ENCODE measurements at regions of chr9 and their contacts with region 1.

Region 1: GRCh38 chr9:127785023-127785932 is 556 bp upstream of the CDK9 start:
- DNase-seq: peak; percentile 89 to 94 (median 92)
- H3K4me3 ChIP-seq: peak overlapping the region; percentile 59 to 94 (median 85)
- H3K27ac ChIP-seq: peak overlapping the region in 1 of 2 experiments; percentile 89
- H3K4me1 ChIP-seq: peaks cover 23 to 69% (median 62%) of the 10 kb centered on the region in 4 experiments
- H3K27me3 ChIP-seq: no peaks in the 10 kb centered on the region

Region 2: DNA sequence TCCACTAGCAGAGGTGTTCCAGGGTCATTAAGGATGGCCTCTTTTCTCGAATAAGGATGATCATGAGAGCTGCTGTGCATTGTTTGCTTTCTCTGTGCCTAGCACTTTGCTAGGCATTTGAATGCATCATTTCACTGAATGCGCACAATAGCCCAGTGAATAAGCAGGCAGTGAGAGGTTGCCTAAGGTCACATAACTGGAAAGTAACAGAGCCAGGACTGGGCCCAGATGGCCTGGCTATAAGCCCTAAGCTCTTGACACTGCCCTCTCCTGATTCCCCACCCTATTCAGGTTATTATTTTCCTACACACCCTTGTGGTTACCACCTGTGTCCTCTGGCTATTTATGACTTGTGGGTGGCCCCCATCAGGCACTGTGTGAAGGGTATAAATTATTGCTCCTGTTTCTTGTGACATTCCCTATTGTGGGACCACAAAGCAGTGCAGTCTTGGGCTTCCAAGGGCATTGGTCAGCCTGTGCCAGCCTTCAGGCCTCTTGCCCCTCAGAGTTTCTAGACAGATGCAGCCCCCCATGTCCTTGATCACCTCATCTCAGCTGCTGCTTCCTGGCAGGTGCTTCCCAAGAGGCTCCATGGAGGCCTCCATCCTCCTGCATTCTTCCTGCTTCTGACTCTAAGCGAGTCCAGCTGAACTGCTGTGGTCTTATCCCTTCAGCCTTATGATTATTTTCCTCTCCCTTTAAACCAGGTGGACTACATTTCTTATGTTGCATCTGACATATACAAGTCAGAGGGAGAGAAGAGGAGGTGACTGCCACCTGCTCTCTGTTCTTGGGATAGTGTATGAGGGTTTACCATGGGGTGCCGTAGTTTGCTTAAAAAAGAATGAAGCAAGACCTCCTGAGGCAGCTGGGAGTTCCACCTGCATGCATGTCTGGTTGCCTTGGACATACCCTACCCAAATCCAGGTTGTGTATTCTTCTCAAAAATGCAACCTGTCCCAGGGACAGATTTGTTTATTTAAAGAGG is 710.4 kb before region 1 on chr9:
- CTCF ChIA-PET with region 1: no interaction called
- POLR2A ChIA-PET with region 1: no interaction called
- DNase-seq: no peak
- H3K4me3 ChIP-seq: no peak overlapping the region
- H3K27ac ChIP-seq: no peak overlapping the region
- H3K4me1 ChIP-seq: no peaks in the 10 kb centered on the region
- H3K27me3 ChIP-seq: peaks cover 0 to 2% (median 0%) of the 10 kb centered on the region in 5 experiments

Region 3: GRCh38 chr9:127651697-127652610 is 133.3 kb before region 1 on chr9:
- CTCF ChIA-PET with region 1: no interaction called
- POLR2A ChIA-PET with region 1: no interaction called
- DNase-seq: peak; percentile 31 to 72 (median 47)
- H3K4me3 ChIP-seq: peak overlapping the region in 1 of 7 experiments; percentile 4
- H3K27ac ChIP-seq: peak overlapping the region in 1 of 2 experiments; percentile 57
- H3K4me1 ChIP-seq: peaks cover 10 to 19% (median 16%) of the 10 kb centered on the region in 4 experiments
- H3K27me3 ChIP-seq: no peaks in the 10 kb centered on the region

Region 4: DNA sequence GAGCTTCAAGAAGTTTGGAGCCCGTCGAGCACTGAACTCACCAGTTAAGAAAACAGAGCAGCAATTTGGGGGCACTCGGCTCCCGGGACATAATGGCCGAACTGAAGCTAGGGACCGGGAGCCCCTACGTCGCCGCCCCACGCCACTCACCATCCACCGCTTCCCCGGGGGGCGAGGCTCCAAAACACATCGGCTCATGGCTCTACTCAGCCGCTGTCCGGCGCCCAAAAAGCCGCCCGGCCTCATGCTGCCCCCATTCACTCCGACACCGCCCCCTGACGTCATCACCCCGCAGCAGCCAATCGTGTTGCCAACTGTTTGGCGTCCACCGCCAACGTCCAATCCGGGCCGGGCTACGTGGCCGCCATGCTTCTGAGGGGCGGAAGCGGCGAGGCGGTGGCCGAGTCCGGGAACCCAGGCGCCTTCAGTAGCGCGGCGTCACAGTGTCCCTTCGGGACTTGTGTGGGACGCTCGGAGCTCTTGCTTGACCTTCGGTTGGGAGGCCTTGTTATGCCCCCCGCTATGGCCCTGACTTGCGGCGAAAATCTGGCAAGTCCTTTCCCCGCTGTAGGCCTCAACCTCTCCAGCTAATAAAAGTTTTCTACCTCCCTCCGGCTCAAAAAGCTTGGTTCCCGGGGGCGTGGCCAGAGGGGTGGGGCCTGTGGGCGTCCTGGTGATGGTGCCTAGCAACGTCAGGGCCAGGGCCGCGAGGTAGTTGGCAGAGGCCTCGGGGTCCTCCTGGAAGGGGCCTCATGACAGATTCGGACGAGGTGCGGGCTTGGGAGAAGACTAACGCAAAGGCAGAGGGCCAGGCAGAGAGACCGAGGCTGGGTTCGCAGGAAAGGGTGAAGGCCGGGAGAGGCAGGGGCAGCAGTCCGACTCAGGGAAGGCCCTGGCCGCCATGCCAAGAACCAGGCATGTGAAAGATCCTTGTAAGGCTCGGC is 69.6 kb before region 1 on chr9 and contains the starts of genes PTRH1 and TTC16:
- CTCF ChIA-PET with region 1: no interaction called
- POLR2A ChIA-PET with region 1: no interaction called
- DNase-seq: peak; percentile 95 to 97 (median 97)
- H3K4me3 ChIP-seq: peak within 1 kb of the TSS; percentile 59 to 91 (median 84)
- H3K27ac ChIP-seq: peak within 1 kb of the TSS; percentile 25 to 81
- H3K4me1 ChIP-seq: peaks cover 0 to 31% (median 26%) of the 10 kb centered on the region in 4 experiments
- H3K27me3 ChIP-seq: peaks cover 0 to 4% (median 0%) of the 10 kb centered on the region in 5 experiments

Region 5: GRCh38 chr9:127734747-127735529 is 50.3 kb before region 1 on chr9 and contains the start of gene TOR2A:
- CTCF ChIA-PET with region 1: interaction called, 8 read pairs
- POLR2A ChIA-PET with region 1: interaction called, 12 read pairs
- DNase-seq: peak; percentile 98 to 99 (median 99)
- H3K4me3 ChIP-seq: peak within 1 kb of the TSS; percentile 53 to 87 (median 71)
- H3K27ac ChIP-seq: peak within 1 kb of the TSS; percentile 87 to 88
- H3K4me1 ChIP-seq: peaks cover 0 to 22% (median 15%) of the 10 kb centered on the region in 4 experiments
- H3K27me3 ChIP-seq: no peaks in the 10 kb centered on the region

Region 6: GRCh38 chr9:127744398-127745110 is 40.7 kb before region 1 on chr9:
- CTCF ChIA-PET with region 1: interaction called, 13 read pairs
- POLR2A ChIA-PET with region 1: interaction called, 3 read pairs
- DNase-seq: no peak
- H3K4me3 ChIP-seq: no peak overlapping the region
- H3K27ac ChIP-seq: no peak overlapping the region
- H3K4me1 ChIP-seq: no peaks in the 10 kb centered on the region
- H3K27me3 ChIP-seq: no peaks in the 10 kb centered on the region

Region 7: DNA sequence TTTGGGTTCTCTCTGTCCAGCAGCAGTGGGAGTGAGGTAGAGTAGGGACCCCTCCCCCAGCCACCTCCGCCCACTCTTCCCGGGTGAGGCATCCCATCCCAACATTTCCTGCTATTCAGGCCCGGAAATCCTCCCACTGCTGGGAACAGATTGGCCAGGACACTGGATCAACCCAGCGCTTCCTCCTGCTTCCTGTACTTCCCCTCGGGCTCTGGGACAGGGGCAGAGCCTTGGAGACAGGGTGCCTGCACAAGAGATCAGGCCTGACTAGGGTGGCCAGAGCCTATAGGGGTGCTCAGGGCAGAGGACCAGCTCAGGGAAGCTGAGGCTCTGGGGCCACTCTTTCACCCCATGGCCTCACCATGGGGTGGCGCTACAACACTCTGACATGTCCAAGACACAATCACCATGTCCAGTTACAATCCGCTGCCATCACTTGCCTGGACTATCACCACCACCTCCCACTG is 21.3 kb before region 1 on chr9:
- CTCF ChIA-PET with region 1: interaction called, 244 read pairs
- POLR2A ChIA-PET with region 1: interaction called, 11 read pairs
- DNase-seq: peak in 2 of 3 donors; percentile 41 to 53
- H3K4me3 ChIP-seq: no peak overlapping the region
- H3K27ac ChIP-seq: no peak overlapping the region
- H3K4me1 ChIP-seq: peaks cover 2 to 52% (median 51%) of the 10 kb centered on the region in 4 experiments
- H3K27me3 ChIP-seq: no peaks in the 10 kb centered on the region

Region 8: DNA sequence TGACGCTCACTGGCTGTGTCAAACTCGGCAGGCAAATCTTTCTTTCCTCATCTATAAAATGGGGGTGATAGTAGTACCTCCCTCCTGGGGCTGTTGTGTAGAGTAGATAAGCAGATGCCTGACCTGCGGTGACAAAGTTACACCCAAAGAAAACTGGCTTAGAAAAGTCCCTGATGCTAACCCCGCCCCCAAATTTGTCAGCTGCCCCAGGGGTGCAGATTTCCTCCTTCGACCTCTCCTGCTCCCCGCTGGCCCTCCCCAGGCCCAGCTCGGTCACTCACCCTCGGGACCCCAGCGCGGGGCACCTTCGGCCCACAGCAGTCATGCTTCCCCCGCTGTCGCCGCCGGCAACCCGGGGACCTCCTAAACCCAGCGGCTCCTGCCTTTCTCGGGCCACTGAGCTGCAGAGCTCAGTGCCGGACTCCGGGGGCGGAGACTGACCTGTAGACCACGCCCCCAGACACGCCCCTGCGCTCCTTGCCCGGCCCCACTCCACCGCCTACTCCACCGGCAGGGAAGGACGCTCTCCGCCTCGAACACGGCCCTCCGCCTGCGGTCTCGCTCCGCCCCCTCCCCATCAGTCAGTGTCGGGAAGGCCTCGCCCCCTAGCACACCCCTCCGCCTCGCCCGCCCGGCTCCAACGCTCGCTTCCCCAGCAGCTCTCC is 14.2 kb before region 1 on chr9:
- CTCF ChIA-PET with region 1: interaction called, 244 read pairs
- POLR2A ChIA-PET with region 1: interaction called, 40 read pairs
- DNase-seq: peak; percentile 98 to 99 (median 99)
- H3K4me3 ChIP-seq: peak overlapping the region; percentile 46 to 83 (median 71)
- H3K27ac ChIP-seq: peak overlapping the region in 1 of 2 experiments; percentile 76
- H3K4me1 ChIP-seq: peaks cover 12 to 70% (median 64%) of the 10 kb centered on the region in 4 experiments
- H3K27me3 ChIP-seq: no peaks in the 10 kb centered on the region

Region 9: DNA sequence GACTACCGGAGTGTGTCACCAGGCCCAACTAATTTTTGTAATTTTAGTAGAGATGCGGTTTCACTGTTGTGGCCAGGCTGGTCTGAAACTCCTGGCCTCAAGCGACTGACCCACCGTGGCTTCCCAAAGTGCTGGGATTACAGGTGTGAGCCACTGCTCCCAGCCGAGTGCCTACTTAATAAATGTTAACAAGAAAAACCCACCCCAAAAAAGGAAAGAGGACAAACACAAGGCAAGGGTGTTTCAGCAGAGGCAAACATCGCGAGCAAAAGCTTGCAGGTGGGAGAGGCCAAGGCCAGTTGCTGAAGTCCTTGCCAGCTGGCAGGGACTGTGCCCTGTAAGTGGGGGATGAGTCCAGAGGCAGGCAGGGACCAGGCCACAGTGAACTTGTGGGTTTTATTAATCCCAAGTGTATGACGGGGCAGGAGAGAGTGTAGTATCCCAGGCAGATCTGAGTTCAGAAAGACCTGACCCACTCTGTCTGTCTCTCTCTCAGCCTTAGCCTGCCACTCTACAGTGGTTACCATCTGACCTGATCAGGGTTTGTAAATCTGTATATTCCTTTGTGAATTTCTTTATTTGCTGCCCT is 11.0 kb after region 1 on chr9:
- CTCF ChIA-PET with region 1: interaction called, 24 read pairs
- POLR2A ChIA-PET with region 1: interaction called, 3 read pairs
- DNase-seq: peak in 2 of 3 donors; percentile 45 to 63
- H3K4me3 ChIP-seq: peak overlapping the region in 3 of 7 experiments; percentile 16 to 54 (median 32)
- H3K27ac ChIP-seq: peak overlapping the region in 1 of 2 experiments; percentile 55
- H3K4me1 ChIP-seq: peaks cover 19 to 85% (median 65%) of the 10 kb centered on the region in 4 experiments
- H3K27me3 ChIP-seq: no peaks in the 10 kb centered on the region

Region 10: GRCh38 chr9:127862075-127863011 is 77.1 kb after region 1 on chr9:
- CTCF ChIA-PET with region 1: interaction called, 20 read pairs
- POLR2A ChIA-PET with region 1: interaction called, 6 read pairs
- DNase-seq: peak; percentile 81 to 97 (median 96)
- H3K4me3 ChIP-seq: peak overlapping the region in 4 of 7 experiments; percentile 26 to 57 (median 39)
- H3K27ac ChIP-seq: peak overlapping the region; percentile 66 to 85
- H3K4me1 ChIP-seq: peaks cover 19 to 89% (median 83%) of the 10 kb centered on the region in 4 experiments
- H3K27me3 ChIP-seq: no peaks in the 10 kb centered on the region

Region 11: DNA sequence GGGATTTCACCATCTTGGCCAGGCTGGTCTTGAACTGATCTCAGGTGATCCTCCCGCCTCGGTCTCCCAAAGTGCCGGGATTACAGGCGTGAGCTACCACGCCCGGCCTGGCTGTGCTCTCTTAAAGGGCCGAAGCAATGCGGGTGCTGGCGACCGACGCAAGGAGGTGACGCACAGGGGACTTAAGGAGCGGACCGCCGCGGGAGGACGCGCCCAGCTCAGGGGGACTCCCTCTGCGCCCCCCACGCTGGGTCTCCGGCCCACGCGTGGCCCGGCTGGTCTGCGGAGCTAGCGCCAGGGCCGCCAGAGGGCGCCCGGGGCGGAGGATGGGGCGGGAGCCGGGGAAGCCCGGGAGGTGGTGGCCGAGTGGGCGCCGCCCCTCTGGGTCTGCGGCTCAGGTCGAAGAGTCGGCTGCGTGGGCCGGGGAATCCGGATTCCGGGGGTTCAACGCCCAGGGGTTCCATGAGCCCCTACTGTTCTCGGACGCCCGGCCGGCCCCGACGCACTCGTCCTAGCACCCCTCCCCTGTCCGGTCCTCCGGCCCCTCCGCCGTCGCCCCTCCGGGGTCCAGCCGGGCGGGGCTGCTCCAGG is 634.9 kb after region 1 on chr9:
- CTCF ChIA-PET with region 1: no interaction called
- POLR2A ChIA-PET with region 1: no interaction called
- DNase-seq: peak; percentile 64 to 74 (median 71)
- H3K4me3 ChIP-seq: peak overlapping the region; percentile 65 to 88 (median 81)
- H3K27ac ChIP-seq: no peak overlapping the region
- H3K4me1 ChIP-seq: peaks cover 0 to 29% (median 22%) of the 10 kb centered on the region in 4 experiments
- H3K27me3 ChIP-seq: peaks cover 0 to 26% (median 7%) of the 10 kb centered on the region in 5 experiments

Measured in common myeloid progenitor, CD34-positive (primary cell).